ENCODE measurements at regions of chr12 and their contacts with region 1.

Region 1: GRCh38 chr12:17841496-17841895 is 248.5 kb downstream of the RERGL start:
- DNase-seq: no peak

Region 2: DNA sequence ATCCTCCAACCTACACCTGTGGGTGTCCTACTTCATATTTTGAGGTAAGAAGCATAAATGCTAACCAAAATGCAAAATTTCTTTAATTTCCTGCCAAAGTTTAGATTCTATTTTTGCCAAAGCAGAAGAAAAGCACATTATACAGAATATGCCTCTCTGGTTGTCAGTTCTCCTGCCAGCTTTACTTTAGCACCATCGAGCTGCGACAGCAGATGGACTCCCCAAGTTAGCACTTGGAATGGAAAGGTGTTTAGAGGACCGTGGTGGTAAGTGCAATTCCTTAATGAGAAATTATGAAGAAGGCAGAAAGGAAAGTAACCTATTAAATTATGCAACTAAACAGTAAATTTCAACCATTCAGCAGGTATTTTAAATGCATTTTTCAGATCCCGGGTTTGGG is 78.1 kb before region 1 on chr12:
- intact Hi-C with region 1: loop called in 1 of 2 experiments (anchors 10 kb)
- DNase-seq: no peak